ENCODE measurements at regions of chr3 and their contacts with region 1.

Region 1: DNA sequence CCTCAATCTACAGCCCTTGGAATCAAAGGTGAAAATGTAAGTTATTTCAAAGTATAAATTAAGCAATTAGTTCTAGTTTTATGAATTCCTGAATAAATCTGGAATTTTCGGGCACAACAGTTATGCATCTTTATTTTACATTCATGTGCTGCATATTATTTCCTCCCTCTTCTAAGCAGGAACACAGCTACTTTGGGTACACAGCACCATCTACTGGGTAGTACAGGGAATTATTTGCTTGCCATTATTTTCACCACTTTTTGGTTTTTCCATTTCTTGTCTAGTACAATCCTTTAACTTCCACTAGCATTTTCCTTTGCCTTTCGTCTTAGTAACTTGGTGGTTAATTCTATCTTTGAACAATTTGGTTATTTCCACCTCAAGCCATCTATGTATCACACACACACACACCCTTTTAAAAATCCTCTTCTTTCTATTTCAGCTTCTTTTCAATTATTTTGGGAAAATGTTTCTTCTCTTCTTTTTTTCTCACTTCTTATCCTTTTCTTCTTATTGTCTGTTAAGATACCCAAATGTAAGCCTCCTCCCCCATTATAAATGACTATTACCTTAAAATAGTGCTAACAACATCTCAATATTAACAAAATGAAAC is 451.0 kb downstream of the MFSD1 start:
- DNase-seq: no peak
- H3K4me3 ChIP-seq: no peak overlapping the region
- H3K27ac ChIP-seq: no peak overlapping the region
- H3K4me1 ChIP-seq: no peaks in the 10 kb centered on the region
- H3K27me3 ChIP-seq: no peaks in the 10 kb centered on the region
- CTCF ChIP-seq: peak in 2 of 3 experiments; percentile 73 to 74; a peak in 3 of 4 replicates
- EP300 ChIP-seq: no peak
- POLR2A ChIP-seq: no peak
- RAD21 ChIP-seq: peak; percentile 94

Region 2: GRCh38 chr3:158912188-158912587 is 340.7 kb before region 1 on chr3:
- CTCF ChIA-PET with region 1: interaction called, 41 read pairs
- POLR2A ChIA-PET with region 1: no interaction called
- DNase-seq: no peak
- H3K4me3 ChIP-seq: no peak overlapping the region
- H3K27ac ChIP-seq: no peak overlapping the region
- H3K4me1 ChIP-seq: no peaks in the 10 kb centered on the region
- H3K27me3 ChIP-seq: no peaks in the 10 kb centered on the region
- CTCF ChIP-seq: peak in 2 of 3 experiments; percentile 45 to 55; a peak in 2 of 4 replicates
- EP300 ChIP-seq: no peak
- POLR2A ChIP-seq: no peak
- RAD21 ChIP-seq: peak; percentile 55 to 67

Region 3: DNA sequence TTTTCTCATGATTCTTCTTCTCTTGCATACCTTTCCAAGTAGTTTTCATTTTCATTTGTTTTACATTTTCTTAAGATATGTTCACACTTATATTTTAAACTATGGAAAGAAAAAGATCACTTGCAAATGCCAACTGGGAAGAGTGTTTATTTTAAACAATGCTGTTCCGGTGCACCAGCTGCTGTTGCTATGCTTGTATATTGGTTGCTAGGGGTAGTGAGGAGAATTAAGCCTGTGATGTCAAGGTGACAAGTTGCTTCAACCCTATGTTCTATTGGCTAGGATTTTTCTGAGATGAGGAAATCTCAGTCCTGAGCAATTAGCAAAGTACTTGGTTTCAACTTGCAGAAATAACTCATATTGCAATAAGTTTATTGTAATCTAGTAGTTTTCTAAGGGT is 49.1 kb after region 1 on chr3:
- CTCF ChIA-PET with region 1: no interaction called
- POLR2A ChIA-PET with region 1: no interaction called
- DNase-seq: no peak
- H3K4me3 ChIP-seq: no peak overlapping the region
- H3K27ac ChIP-seq: no peak overlapping the region
- H3K4me1 ChIP-seq: no peaks in the 10 kb centered on the region; a peak in 1 of 7 replicates
- H3K27me3 ChIP-seq: no peaks in the 10 kb centered on the region
- CTCF ChIP-seq: no peak
- EP300 ChIP-seq: no peak
- POLR2A ChIP-seq: no peak
- RAD21 ChIP-seq: no peak

Measured in H1 (cell line).